ENCODE measurements at regions of chr20 and their contacts with region 1.

Region 1: GRCh38 chr20:47379433-47380150 is 23.1 kb upstream of the ZMYND8 start:
- DNase-seq: no peak
- ATAC-seq: no peak
- H3K4me3 Mint-ChIP-seq: no peak overlapping the region
- H3K27ac Mint-ChIP-seq: peak overlapping the region; percentile 58
- H3K4me1 Mint-ChIP-seq: peaks cover 31% of the 10 kb centered on the region
- H3K27me3 Mint-ChIP-seq: no peaks in the 10 kb centered on the region; the same call in 1 of the 2 replicates
- CTCF ChIP-seq: no peak

Region 2: GRCh38 chr20:47220161-47220582 is 159.4 kb before region 1 on chr20:
- CTCF ChIA-PET with region 1: interaction called, 37 read pairs
- POLR2A ChIA-PET with region 1: no interaction called
- DNase-seq: peak; percentile 67
- ATAC-seq: peak; percentile 73
- H3K4me3 Mint-ChIP-seq: no peak overlapping the region
- H3K27ac Mint-ChIP-seq: no peak overlapping the region
- H3K4me1 Mint-ChIP-seq: peaks cover 3% of the 10 kb centered on the region; the same call in 1 of the 2 replicates
- H3K27me3 Mint-ChIP-seq: no peaks in the 10 kb centered on the region
- CTCF ChIP-seq: peak; percentile 65; the same call in 1 of the 2 replicates

Region 3: GRCh38 chr20:47262365-47263013 is 117.1 kb before region 1 on chr20:
- CTCF ChIA-PET with region 1: interaction called, 24 read pairs
- POLR2A ChIA-PET with region 1: no interaction called
- DNase-seq: no peak
- ATAC-seq: no peak
- H3K4me3 Mint-ChIP-seq: no peak overlapping the region
- H3K27ac Mint-ChIP-seq: peak overlapping the region; percentile 35
- H3K4me1 Mint-ChIP-seq: peaks cover 16% of the 10 kb centered on the region
- H3K27me3 Mint-ChIP-seq: no peaks in the 10 kb centered on the region
- CTCF ChIP-seq: no peak

Region 4: GRCh38 chr20:47296950-47297349 is 82.6 kb before region 1 on chr20:
- CTCF ChIA-PET with region 1: interaction called, 24 read pairs
- POLR2A ChIA-PET with region 1: no interaction called
- DNase-seq: no peak
- ATAC-seq: peak; percentile 55
- H3K4me3 Mint-ChIP-seq: no peak overlapping the region
- H3K27ac Mint-ChIP-seq: peak overlapping the region; percentile 80
- H3K4me1 Mint-ChIP-seq: peaks cover 44% of the 10 kb centered on the region
- H3K27me3 Mint-ChIP-seq: no peaks in the 10 kb centered on the region
- CTCF ChIP-seq: no peak; the same call in 1 of the 2 replicates

Region 5: DNA sequence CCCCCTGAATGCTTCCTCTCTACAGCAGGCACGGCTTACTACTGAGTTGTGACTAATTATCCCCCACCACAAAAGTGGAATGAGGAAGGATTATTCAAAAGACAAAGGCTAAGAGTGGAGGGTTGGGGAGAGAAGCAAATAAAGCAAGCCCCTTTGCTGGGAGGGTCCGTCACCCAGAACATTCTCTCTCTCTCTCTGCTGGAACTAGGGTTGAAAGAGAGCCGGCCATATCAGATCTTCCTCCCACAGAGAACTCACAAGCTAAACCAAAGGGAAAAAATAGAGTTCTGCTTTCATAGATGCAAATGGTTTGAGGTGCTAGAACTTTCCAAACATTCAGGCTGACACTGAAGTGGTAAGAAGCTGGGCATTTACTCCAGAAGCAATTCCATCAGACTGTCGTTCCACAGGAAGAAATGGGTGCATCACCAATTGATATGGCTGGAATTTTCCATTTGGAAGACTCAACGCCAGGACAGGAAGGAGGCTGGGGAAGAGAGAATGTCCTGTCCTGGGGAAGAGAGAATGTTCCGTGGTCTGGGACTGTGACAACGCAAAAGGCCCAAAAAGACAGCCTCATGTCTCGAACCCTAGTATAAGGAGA is 31.0 kb before region 1 on chr20:
- CTCF ChIA-PET with region 1: interaction called, 41 read pairs
- POLR2A ChIA-PET with region 1: interaction called, 3 read pairs
- DNase-seq: no peak
- ATAC-seq: peak; percentile 16
- H3K4me3 Mint-ChIP-seq: no peak overlapping the region
- H3K27ac Mint-ChIP-seq: no peak overlapping the region
- H3K4me1 Mint-ChIP-seq: peaks cover 9% of the 10 kb centered on the region
- H3K27me3 Mint-ChIP-seq: no peaks in the 10 kb centered on the region
- CTCF ChIP-seq: no peak

Region 6: GRCh38 chr20:47501483-47502270 is 122.1 kb after region 1 on chr20 and contains the start of gene NCOA3:
- CTCF ChIA-PET with region 1: interaction called, 10 read pairs
- POLR2A ChIA-PET with region 1: interaction called, 3 read pairs
- DNase-seq: peak; percentile 98
- ATAC-seq: peak; percentile 98
- H3K4me3 Mint-ChIP-seq: peak within 1 kb of the TSS; percentile 93
- H3K27ac Mint-ChIP-seq: peak within 1 kb of the TSS; percentile 92
- H3K4me1 Mint-ChIP-seq: peaks cover 41% of the 10 kb centered on the region
- H3K27me3 Mint-ChIP-seq: no peaks in the 10 kb centered on the region
- CTCF ChIP-seq: no peak
- total RNA-seq, gene NCOA3: 20.2 to 25.2 TPM (median 21.5 TPM) in 3 replicates

Measured in WTC11 (cell line).